ENCODE measurements at regions of chr3 and their contacts with region 1.

Region 1: GRCh38 chr3:197186887-197187588 is 111.4 kb downstream of the DLG1 start:
- DNase-seq: no peak
- ATAC-seq: peak; percentile 74
- H3K4me3 ChIP-seq: no peak overlapping the region
- H3K27ac ChIP-seq: no peak overlapping the region
- H3K4me1 ChIP-seq: no peaks in the 10 kb centered on the region
- H3K27me3 ChIP-seq: no peaks in the 10 kb centered on the region

Region 2: DNA sequence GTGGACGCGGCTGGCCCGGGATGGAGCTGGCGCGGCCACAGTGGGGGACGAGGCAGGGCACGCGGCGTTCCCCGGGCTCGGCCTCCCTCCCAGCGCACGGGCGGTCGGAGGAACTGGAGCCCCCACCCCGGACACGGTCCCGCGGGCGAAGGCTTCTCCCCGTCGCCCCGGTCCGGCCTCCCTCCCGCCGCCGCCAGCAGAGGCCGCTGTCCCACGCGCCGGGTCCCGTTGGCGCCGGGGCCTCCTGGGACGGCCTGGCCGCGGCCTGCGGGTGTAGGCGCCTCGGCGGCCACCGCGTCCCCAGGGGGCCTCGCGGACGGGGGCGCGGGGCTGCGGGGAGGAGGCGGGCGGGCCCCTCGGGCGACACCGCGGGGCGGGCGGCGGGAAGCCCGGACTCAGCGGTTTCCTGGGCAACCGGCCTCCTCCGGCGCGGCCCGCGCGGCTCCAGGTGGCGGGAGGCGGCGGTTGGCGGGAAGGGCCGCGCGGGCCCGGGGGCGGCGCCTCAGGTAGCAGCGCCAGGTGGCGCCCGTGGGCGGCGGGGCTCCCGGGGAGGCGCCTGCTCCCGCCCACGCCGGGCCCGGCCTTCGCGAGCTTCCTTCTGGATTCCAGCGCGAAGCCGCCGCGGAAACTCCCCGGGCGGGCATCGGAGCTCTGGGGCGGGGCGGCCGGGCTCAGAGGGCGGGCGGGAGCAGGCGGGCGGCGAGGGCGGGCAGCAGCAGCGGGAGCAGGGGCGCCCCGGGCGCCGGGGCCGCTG is 184.2 kb before region 1 on chr3:
- intact Hi-C with region 1: loop called (anchors 5 to 10 kb)
- DNase-seq: peak; percentile 75 to 92 (median 91)
- ATAC-seq: peak; percentile 89
- H3K4me3 ChIP-seq: peak overlapping the region; percentile 94
- H3K27ac ChIP-seq: peak overlapping the region; percentile 2
- H3K4me1 ChIP-seq: no peaks in the 10 kb centered on the region
- H3K27me3 ChIP-seq: no peaks in the 10 kb centered on the region

Region 3: DNA sequence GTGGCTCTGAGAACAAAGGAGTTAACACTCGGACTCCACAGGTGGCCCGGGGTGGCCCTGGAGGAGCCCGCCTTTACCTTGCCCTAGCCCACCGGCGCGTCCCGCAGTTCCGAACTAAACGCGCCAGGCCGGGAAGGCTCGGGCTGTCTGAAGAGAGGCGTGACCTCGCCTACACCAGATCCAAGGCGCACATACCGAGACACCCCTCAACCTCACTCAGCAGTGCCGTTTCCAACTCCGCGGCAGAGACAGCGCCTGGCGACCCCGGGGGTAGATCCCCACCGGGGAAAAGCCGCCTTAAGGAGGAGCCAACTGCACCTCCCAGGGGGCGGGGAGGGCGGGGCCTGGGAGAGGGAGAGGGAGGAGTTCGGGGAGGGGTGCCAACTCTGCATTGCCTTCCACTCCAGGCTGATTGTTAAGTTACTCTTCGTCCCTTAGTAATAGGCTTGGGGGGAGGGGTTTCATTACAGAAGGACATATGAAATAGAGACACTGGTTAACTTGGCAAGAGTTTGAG is 111.4 kb after region 1 on chr3 and contains the start of gene DLG1:
- intact Hi-C with region 1: no loop called
- DNase-seq: peak; percentile 91 to 96 (median 95)
- ATAC-seq: peak; percentile 93
- H3K4me3 ChIP-seq: peak within 1 kb of the TSS; percentile 69
- H3K27ac ChIP-seq: peak within 1 kb of the TSS; percentile 90
- H3K4me1 ChIP-seq: no peaks in the 10 kb centered on the region
- H3K27me3 ChIP-seq: no peaks in the 10 kb centered on the region
- total RNA-seq, gene DLG1: 51.1 to 55.0 (median 53.0) TPM

Region 4: DNA sequence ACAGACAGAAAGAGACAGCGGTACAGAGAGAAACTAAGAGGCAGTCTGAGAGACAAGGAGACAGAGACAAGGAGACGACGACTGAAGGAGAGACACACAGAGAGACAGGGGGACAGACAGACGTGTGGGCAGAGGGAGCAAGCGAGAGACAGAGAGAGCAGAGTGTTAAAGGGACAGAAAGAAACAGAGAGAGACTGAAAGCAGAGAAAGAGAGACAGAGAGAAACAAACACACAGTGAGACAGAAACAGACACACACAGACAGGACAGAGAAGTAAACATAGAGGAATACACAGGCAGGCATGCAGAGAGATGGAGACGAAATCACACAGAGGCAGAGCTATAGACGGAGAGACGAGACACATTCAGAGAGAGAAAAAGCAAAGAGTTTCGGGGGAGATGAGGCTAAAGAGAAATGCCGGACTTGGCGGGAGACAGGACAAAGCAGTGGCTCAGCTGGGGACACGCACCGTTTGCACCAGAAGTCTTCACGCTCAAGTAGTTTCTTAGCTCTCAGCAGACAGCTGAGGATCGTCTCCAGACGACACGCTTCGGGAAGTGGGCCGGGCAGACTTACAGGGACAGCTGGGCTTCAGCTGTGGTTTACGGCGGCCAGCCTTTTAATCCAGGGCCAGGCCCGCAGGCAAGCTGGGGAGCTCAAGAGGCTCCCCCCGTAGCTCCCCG is 167.4 kb after region 1 on chr3:
- intact Hi-C with region 1: no loop called
- DNase-seq: peak; percentile 61 to 85 (median 78)
- ATAC-seq: peak in 1 of 2 donors; percentile 31
- H3K4me3 ChIP-seq: no peak overlapping the region
- H3K27ac ChIP-seq: no peak overlapping the region
- H3K4me1 ChIP-seq: peaks cover 2% of the 10 kb centered on the region
- H3K27me3 ChIP-seq: no peaks in the 10 kb centered on the region